ENCODE measurements at regions of chr17 and their contacts with region 1.

Region 1: GRCh38 chr17:75405365-75406221 is at the start of gene GRB2:
- DNase-seq: peak; percentile 98 to 100 (median 100)
- ATAC-seq: peak; percentile 93
- H3K4me3 ChIP-seq: peak within 1 kb of the TSS; percentile 83
- H3K4me3 Mint-ChIP-seq: peak within 1 kb of the TSS; percentile 91 to 100 (median 96)
- H3K27ac ChIP-seq: peak within 1 kb of the TSS; percentile 91
- H3K27ac Mint-ChIP-seq: peak within 1 kb of the TSS; percentile 84 to 98 (median 95)
- H3K4me1 ChIP-seq: peaks cover 31 to 33% of the 10 kb centered on the region in 2 donors
- H3K4me1 Mint-ChIP-seq: peaks cover 26 to 51% (median 47%) of the 10 kb centered on the region in 7 donors
- H3K27me3 ChIP-seq: no peaks in the 10 kb centered on the region
- H3K27me3 Mint-ChIP-seq: no peaks in the 10 kb centered on the region
- total RNA-seq, gene GRB2: 112 to 167 (median 139) TPM

Region 2: GRCh38 chr17:74972107-74972972 is 433.3 kb before region 1 on chr17 and contains the start of gene HID1:
- CTCF ChIA-PET with region 1: no interaction called
- POLR2A ChIA-PET with region 1: no interaction called
- intact Hi-C with region 1: loop called in 1 of 2 experiments (anchors 5 kb)
- DNase-seq: peak; percentile 60 to 79 (median 74)
- ATAC-seq: peak; percentile 93
- H3K4me3 ChIP-seq: peak within 1 kb of the TSS; percentile 58
- H3K4me3 Mint-ChIP-seq: peak within 1 kb of the TSS; percentile 80 to 98 (median 87)
- H3K27ac ChIP-seq: peak within 1 kb of the TSS; percentile 51
- H3K27ac Mint-ChIP-seq: peak within 1 kb of the TSS in 8 of 9 donors; percentile 56 to 86 (median 80)
- H3K4me1 ChIP-seq: peaks cover 4 to 9% of the 10 kb centered on the region in 2 donors
- H3K4me1 Mint-ChIP-seq: peaks cover 5 to 18% (median 7%) of the 10 kb centered on the region in 7 donors
- H3K27me3 ChIP-seq: no peaks in the 10 kb centered on the region
- H3K27me3 Mint-ChIP-seq: peaks cover 0 to 55% (median 7%) of the 10 kb centered on the region in 5 donors
- total RNA-seq, gene HID1: 0.60 to 25.2 (median 14.8) TPM

Region 3: DNA sequence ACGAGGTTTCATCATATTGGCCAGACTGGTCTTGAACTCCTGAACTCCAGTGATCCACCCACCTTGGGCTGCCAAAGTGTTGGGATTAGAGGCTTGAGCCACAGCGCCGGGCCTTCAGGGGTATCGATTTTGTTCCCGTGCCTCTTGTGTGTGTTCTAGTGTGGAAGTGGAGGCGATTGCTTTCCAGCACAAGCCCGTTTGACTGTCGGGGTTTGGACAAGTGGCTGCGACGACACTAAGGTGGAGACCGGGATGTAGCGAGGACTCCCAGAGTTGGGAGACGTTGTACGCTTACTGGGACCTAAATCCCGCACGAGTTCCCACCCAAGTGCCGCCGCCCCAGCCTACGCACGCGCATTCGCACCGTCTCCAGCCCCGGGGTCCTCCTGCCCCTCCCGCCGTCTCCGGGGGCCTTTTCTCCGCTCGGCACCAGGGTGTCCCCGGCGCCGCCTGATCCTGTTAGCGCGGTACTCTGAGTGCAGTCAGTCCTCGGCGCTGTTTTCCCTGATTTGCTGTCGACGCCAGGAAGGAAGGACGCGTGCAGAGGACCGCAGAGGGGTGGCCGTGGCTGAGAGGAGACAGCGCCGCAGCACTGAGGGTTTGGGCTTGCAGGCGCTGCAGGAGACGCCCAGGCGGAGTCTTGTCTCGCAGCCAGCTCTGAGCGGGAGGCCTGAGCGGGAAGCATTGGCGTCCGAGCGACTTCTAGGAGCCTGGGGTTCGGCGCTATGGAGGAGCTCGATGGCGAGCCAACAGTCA is 200.4 kb before region 1 on chr17 and contains the start of gene NUP85:
- CTCF ChIA-PET with region 1: no interaction called
- POLR2A ChIA-PET with region 1: no interaction called
- intact Hi-C with region 1: loop called in 1 of 2 experiments (anchors 1 kb)
- DNase-seq: peak; percentile 87 to 97 (median 93)
- ATAC-seq: peak; percentile 96
- H3K4me3 ChIP-seq: peak within 1 kb of the TSS; percentile 82
- H3K4me3 Mint-ChIP-seq: peak within 1 kb of the TSS; percentile 91 to 98 (median 96)
- H3K27ac ChIP-seq: peak within 1 kb of the TSS; percentile 95
- H3K27ac Mint-ChIP-seq: peak within 1 kb of the TSS; percentile 94 to 100 (median 99)
- H3K4me1 ChIP-seq: peaks cover 0 to 5% of the 10 kb centered on the region in 2 donors
- H3K4me1 Mint-ChIP-seq: peaks cover 12 to 47% (median 26%) of the 10 kb centered on the region in 7 donors
- H3K27me3 ChIP-seq: no peaks in the 10 kb centered on the region
- H3K27me3 Mint-ChIP-seq: no peaks in the 10 kb centered on the region
- total RNA-seq, gene NUP85: 96.3 to 143 (median 99.2) TPM

Region 4: GRCh38 chr17:75289115-75289831 is 116.3 kb before region 1 on chr17 and contains the start of gene SLC25A19:
- CTCF ChIA-PET with region 1: interaction called, 6 read pairs
- POLR2A ChIA-PET with region 1: interaction called, 32 read pairs
- intact Hi-C with region 1: loop called (anchors 1 kb)
- DNase-seq: peak; percentile 80 to 98 (median 95)
- ATAC-seq: peak; percentile 96
- H3K4me3 ChIP-seq: peak within 1 kb of the TSS; percentile 84
- H3K4me3 Mint-ChIP-seq: peak within 1 kb of the TSS; percentile 96 to 100 (median 100)
- H3K27ac ChIP-seq: peak within 1 kb of the TSS; percentile 90
- H3K27ac Mint-ChIP-seq: peak within 1 kb of the TSS; percentile 99 to 100 (median 100)
- H3K4me1 ChIP-seq: peaks cover 0 to 6% of the 10 kb centered on the region in 2 donors
- H3K4me1 Mint-ChIP-seq: peaks cover 6 to 28% (median 15%) of the 10 kb centered on the region in 7 donors
- H3K27me3 ChIP-seq: no peaks in the 10 kb centered on the region
- H3K27me3 Mint-ChIP-seq: peaks cover 0 to 2% (median 0%) of the 10 kb centered on the region in 5 donors
- total RNA-seq, gene SLC25A19: 15.6 to 42.5 (median 21.1) TPM

Region 5: GRCh38 chr17:75345514-75346167 is 60.0 kb before region 1 on chr17:
- CTCF ChIA-PET with region 1: no interaction called
- POLR2A ChIA-PET with region 1: interaction called, 9 read pairs
- intact Hi-C with region 1: loop called in 1 of 2 experiments (anchors 1 kb)
- DNase-seq: peak in 8 of 9 donors; percentile 36 to 65 (median 53)
- ATAC-seq: peak; percentile 82
- H3K4me3 ChIP-seq: peak overlapping the region; percentile 43
- H3K4me3 Mint-ChIP-seq: peak overlapping the region; percentile 65 to 91 (median 81)
- H3K27ac ChIP-seq: peak overlapping the region; percentile 65
- H3K27ac Mint-ChIP-seq: peak overlapping the region; percentile 76 to 98 (median 93)
- H3K4me1 ChIP-seq: peaks cover 61 to 85% of the 10 kb centered on the region in 2 donors
- H3K4me1 Mint-ChIP-seq: peaks cover 60 to 100% (median 91%) of the 10 kb centered on the region in 7 donors
- H3K27me3 ChIP-seq: no peaks in the 10 kb centered on the region
- H3K27me3 Mint-ChIP-seq: no peaks in the 10 kb centered on the region

Region 6: GRCh38 chr17:75456417-75457046 is 50.9 kb after region 1 on chr17 and contains the start of gene TMEM94:
- CTCF ChIA-PET with region 1: no interaction called
- POLR2A ChIA-PET with region 1: interaction called, 5 read pairs
- intact Hi-C with region 1: loop called (anchors 1 kb)
- DNase-seq: peak; percentile 70 to 93 (median 89)
- ATAC-seq: peak; percentile 98
- H3K4me3 ChIP-seq: peak within 1 kb of the TSS; percentile 99
- H3K4me3 Mint-ChIP-seq: peak within 1 kb of the TSS; percentile 92 to 99 (median 94)
- H3K27ac ChIP-seq: peak within 1 kb of the TSS; percentile 74
- H3K27ac Mint-ChIP-seq: peak within 1 kb of the TSS; percentile 84 to 99 (median 93)
- H3K4me1 ChIP-seq: peaks cover 10% of the 10 kb centered on the region in 2 donors
- H3K4me1 Mint-ChIP-seq: peaks cover 25 to 42% (median 34%) of the 10 kb centered on the region in 7 donors
- H3K27me3 ChIP-seq: no peaks in the 10 kb centered on the region
- H3K27me3 Mint-ChIP-seq: no peaks in the 10 kb centered on the region
- total RNA-seq, gene TMEM94: 74.1 to 97.2 (median 81.9) TPM